Left colon (tissue), 2 donors: ENCODE measurements at regions of chr17 and their contacts with region 1.

Region 1: DNA sequence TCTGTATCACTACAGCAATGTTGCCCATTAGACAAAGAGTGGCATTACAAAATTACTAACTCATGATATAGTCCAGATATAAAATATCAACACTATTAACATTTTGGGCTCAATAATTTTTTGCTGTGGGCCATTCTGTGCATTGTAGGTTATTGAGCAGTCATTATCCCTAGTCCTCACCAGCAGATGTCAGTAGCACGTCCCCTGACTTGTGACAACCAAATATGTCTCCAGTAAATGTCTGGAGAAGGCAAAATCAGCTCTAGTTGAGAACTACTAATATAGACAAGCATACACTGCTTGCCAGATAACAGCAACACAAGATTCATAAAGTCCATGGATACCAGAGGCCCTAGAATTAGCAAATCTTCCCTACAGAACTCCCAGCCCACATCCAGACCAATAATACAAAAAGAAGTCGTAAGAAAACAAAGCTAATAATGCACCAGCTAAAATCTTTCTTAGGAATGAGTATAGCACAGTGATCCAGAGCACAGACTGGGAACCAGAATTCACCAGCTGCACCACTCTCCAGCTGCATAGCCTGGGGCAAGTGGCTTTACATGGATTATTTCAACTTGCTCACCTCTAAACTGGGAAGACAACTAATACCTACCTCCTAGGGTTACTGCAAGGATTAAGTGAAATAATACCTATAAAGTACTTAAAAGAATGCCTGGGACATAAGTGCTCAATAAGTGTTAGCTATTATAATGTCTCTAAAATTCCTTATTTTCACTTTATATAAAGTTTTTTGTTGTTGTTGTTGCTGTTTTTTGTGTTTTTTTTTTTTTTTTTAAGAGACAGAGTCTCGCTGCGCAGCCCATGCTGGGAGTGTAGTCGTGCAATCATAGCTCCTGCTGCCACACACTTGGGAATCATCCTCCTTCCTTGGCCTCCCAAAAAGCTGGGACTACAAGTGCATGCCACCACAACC is 23.7 kb downstream of the HELZ start:
- DNase-seq: no peak
- ATAC-seq: peak; percentile 65

Region 2: GRCh38 chr17:67293251-67294203 is 72.2 kb after region 1 on chr17:
- intact Hi-C with region 1: loop called in 1 of 2 experiments (anchors 10 kb)
- DNase-seq: peak; percentile 51 to 76
- ATAC-seq: peak; percentile 96

Region 3: GRCh38 chr17:67359960-67360773 is 138.8 kb after region 1 on chr17:
- intact Hi-C with region 1: no loop called
- DNase-seq: no peak
- ATAC-seq: no peak

Region 4: GRCh38 chr17:67374329-67375053 is 153.2 kb after region 1 on chr17:
- intact Hi-C with region 1: no loop called
- DNase-seq: peak; percentile 82 to 93
- ATAC-seq: peak; percentile 40